Activated CD4-positive, alpha-beta T cell treated with anti-CD3 and anti-CD28 coated beads for 36 hours (primary cell): ENCODE measurements at regions of chr1 and their contacts with region 1.

Region 1: GRCh38 chr1:70221241-70222121 is at the start of gene SRSF11:
- DNase-seq: peak; percentile 99
- ATAC-seq: peak; percentile 94
- H3K4me3 Mint-ChIP-seq: peak within 1 kb of the TSS; percentile 95
- H3K27ac Mint-ChIP-seq: peak within 1 kb of the TSS; percentile 98
- H3K4me1 Mint-ChIP-seq: peaks cover 36% of the 10 kb centered on the region
- H3K27me3 Mint-ChIP-seq: no peaks in the 10 kb centered on the region
- total RNA-seq, gene SRSF11: 182 to 266 TPM

Region 2: GRCh38 chr1:70072231-70072751 is 149.2 kb before region 1 on chr1:
- CTCF ChIA-PET with region 1: no interaction called
- POLR2A ChIA-PET with region 1: no interaction called
- intact Hi-C with region 1: no loop called
- DNase-seq: no peak
- ATAC-seq: peak; percentile 69
- H3K4me3 Mint-ChIP-seq: no peak overlapping the region
- H3K27ac Mint-ChIP-seq: no peak overlapping the region
- H3K4me1 Mint-ChIP-seq: no peaks in the 10 kb centered on the region
- H3K27me3 Mint-ChIP-seq: no peaks in the 10 kb centered on the region

Region 3: GRCh38 chr1:70205434-70206118 is 15.9 kb before region 1 on chr1 and contains the start of gene LRRC40:
- CTCF ChIA-PET with region 1: interaction called, 9 read pairs
- POLR2A ChIA-PET with region 1: interaction called, 17 read pairs
- intact Hi-C with region 1: loop called (anchors 1 kb)
- DNase-seq: peak; percentile 97
- ATAC-seq: peak; percentile 89
- H3K4me3 Mint-ChIP-seq: peak within 1 kb of the TSS; percentile 99
- H3K27ac Mint-ChIP-seq: peak within 1 kb of the TSS; percentile 99
- H3K4me1 Mint-ChIP-seq: peaks cover 66% of the 10 kb centered on the region
- H3K27me3 Mint-ChIP-seq: no peaks in the 10 kb centered on the region
- total RNA-seq, gene LRRC40: 23.2 to 26.4 TPM

Region 4: DNA sequence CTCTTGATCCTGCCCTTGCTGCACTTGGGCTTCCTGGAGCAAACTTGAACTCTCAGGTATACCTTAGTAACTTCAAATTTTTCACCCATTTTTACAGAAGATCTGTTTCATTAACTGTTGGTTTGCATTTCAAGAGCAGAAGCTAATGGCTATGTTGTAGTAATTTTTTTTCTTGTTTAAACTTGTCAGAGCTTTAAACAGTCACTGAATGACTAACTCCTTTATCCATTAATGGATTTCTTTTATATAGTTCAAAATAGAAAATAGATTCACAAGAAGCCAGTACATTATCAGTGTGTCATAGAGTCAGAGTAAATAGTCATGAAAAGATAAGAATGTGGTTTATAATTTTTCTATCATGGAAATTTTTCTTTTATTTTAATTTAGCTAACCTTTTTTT is 13.3 kb after region 1 on chr1:
- CTCF ChIA-PET with region 1: interaction called, 5 read pairs
- POLR2A ChIA-PET with region 1: interaction called, 11 read pairs
- intact Hi-C with region 1: no loop called
- DNase-seq: no peak
- ATAC-seq: no peak
- H3K4me3 Mint-ChIP-seq: no peak overlapping the region
- H3K27ac Mint-ChIP-seq: peak overlapping the region; percentile 14
- H3K4me1 Mint-ChIP-seq: peaks cover 5% of the 10 kb centered on the region
- H3K27me3 Mint-ChIP-seq: no peaks in the 10 kb centered on the region

Region 5: GRCh38 chr1:70354332-70355110 is 133.0 kb after region 1 on chr1 and contains the start of gene ANKRD13C:
- CTCF ChIA-PET with region 1: no interaction called
- POLR2A ChIA-PET with region 1: interaction called, 7 read pairs
- intact Hi-C with region 1: loop called (anchors 1 to 5 kb)
- DNase-seq: peak; percentile 95
- ATAC-seq: peak; percentile 96
- H3K4me3 Mint-ChIP-seq: peak within 1 kb of the TSS; percentile 91
- H3K27ac Mint-ChIP-seq: peak within 1 kb of the TSS; percentile 100
- H3K4me1 Mint-ChIP-seq: peaks cover 33% of the 10 kb centered on the region
- H3K27me3 Mint-ChIP-seq: no peaks in the 10 kb centered on the region
- total RNA-seq, gene ANKRD13C: 13.9 TPM

Region 6: DNA sequence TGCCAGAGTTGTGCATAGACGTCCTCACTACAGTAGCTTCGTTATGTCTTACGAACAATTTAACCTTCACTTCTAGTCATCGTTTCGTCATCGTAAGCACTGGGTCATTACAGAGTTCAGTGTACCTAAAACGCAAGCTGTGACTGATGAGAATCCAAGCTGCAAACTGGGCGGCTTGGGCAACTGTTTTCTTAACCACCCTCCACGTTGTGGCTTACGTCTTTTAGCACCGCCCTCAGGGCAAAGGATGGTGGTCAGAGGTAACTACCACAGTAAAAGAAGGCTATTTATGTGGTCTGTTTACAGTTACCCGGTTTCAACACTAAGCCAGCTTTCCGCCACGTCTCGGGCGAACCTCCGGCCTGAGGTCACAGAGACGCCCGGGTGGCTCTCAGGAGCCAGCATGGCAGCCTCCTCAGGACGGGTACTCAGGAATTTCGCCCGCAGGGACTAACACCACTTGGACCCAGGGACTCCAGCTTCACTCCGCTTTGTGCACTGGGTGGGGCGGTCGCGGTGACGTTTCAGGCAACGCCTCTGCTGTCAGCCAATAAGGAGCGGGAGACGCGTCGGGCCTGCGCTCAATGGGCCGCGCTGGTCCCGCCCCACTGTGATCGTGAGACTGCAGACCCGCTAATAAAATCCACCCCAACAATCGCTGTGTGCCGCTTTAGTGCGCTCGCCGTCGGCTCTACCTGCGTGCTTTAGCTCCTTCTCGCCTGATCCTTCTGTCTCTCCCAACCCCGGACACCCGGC is 189.3 kb after region 1 on chr1 and contains the start of gene CTH:
- CTCF ChIA-PET with region 1: no interaction called
- POLR2A ChIA-PET with region 1: interaction called, 14 read pairs
- intact Hi-C with region 1: loop called (anchors 1 to 5 kb)
- DNase-seq: peak; percentile 96
- ATAC-seq: peak; percentile 95
- H3K4me3 Mint-ChIP-seq: peak within 1 kb of the TSS; percentile 90
- H3K27ac Mint-ChIP-seq: peak within 1 kb of the TSS; percentile 83
- H3K4me1 Mint-ChIP-seq: peaks cover 13% of the 10 kb centered on the region
- H3K27me3 Mint-ChIP-seq: no peaks in the 10 kb centered on the region
- total RNA-seq, gene CTH: 25.3 to 29.8 TPM